MCF 10A (cell line): ENCODE measurements at regions of chr5 and their contacts with region 1.

Region 1: GRCh38 chr5:175534070-175534932 is 55.9 kb downstream of the SFXN1 start:
- DNase-seq: peak; percentile 83
- H3K4me3 Mint-ChIP-seq: no peak overlapping the region
- H3K27ac Mint-ChIP-seq: no peak overlapping the region
- H3K4me1 Mint-ChIP-seq: no peaks in the 10 kb centered on the region
- H3K27me3 Mint-ChIP-seq: no peaks in the 10 kb centered on the region
- CTCF ChIP-seq: peak; percentile 100

Region 2: DNA sequence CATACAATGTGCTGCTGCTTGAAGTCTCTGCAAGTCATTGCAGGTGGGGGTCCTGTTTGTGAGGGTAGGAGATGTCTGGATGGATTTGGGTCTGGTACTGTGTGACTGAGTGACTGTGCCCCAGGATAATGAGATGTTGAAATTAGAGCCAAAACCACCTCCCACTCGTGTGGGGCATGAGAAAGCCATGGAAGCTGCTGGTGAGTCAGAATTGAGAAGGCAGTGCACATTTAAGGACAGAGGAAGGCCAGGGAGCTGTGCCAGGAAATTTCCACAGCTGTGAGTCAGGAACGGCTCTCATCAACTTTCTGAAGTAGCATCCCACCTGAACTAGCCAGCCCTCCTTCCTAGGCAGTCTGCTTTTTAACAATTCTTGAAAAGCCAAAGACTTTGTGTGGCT is 320.1 kb before region 1 on chr5:
- CTCF ChIA-PET with region 1: no interaction called
- POLR2A ChIA-PET with region 1: no interaction called
- intact Hi-C with region 1: no loop called
- DNase-seq: peak; percentile 88
- H3K4me3 Mint-ChIP-seq: no peak overlapping the region
- H3K27ac Mint-ChIP-seq: no peak overlapping the region
- H3K4me1 Mint-ChIP-seq: peaks cover 6% of the 10 kb centered on the region
- H3K27me3 Mint-ChIP-seq: peaks cover 60% of the 10 kb centered on the region
- CTCF ChIP-seq: no peak

Region 3: DNA sequence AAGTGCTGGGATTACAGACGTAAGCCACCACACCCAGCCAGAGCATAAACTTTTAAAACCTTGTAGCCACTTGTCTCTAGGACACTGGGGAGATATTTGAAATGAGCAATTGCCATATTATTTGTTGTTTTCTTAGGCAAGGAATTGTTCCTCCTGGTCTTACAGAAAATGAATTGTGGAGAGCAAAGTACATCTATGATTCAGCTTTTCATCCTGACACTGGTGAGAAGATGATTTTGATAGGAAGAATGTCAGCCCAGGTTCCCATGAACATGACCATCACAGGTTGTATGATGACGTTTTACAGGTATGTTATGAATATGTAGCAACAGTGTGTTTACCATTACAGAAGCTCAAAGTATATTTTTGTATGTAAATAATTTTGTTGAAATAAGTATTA is 25.4 kb before region 1 on chr5:
- CTCF ChIA-PET with region 1: interaction called, 24 read pairs
- POLR2A ChIA-PET with region 1: no interaction called
- intact Hi-C with region 1: no loop called
- DNase-seq: no peak
- H3K4me3 Mint-ChIP-seq: no peak overlapping the region
- H3K27ac Mint-ChIP-seq: no peak overlapping the region
- H3K4me1 Mint-ChIP-seq: no peaks in the 10 kb centered on the region
- H3K27me3 Mint-ChIP-seq: no peaks in the 10 kb centered on the region
- CTCF ChIP-seq: no peak

Region 4: GRCh38 chr5:175548626-175549311 is 14.5 kb after region 1 on chr5:
- CTCF ChIA-PET with region 1: interaction called, 32 read pairs
- POLR2A ChIA-PET with region 1: no interaction called
- intact Hi-C with region 1: no loop called
- DNase-seq: no peak
- H3K4me3 Mint-ChIP-seq: no peak overlapping the region
- H3K27ac Mint-ChIP-seq: no peak overlapping the region
- H3K4me1 Mint-ChIP-seq: no peaks in the 10 kb centered on the region
- H3K27me3 Mint-ChIP-seq: peaks cover 62% of the 10 kb centered on the region
- CTCF ChIP-seq: no peak

Region 5: GRCh38 chr5:175572886-175573285 is 38.6 kb after region 1 on chr5:
- CTCF ChIA-PET with region 1: interaction called, 10 read pairs
- POLR2A ChIA-PET with region 1: no interaction called
- intact Hi-C with region 1: no loop called
- DNase-seq: peak; percentile 31
- H3K4me3 Mint-ChIP-seq: no peak overlapping the region
- H3K27ac Mint-ChIP-seq: no peak overlapping the region
- H3K4me1 Mint-ChIP-seq: peaks cover 7% of the 10 kb centered on the region
- H3K27me3 Mint-ChIP-seq: peaks cover 17% of the 10 kb centered on the region
- CTCF ChIP-seq: no peak

Region 6: DNA sequence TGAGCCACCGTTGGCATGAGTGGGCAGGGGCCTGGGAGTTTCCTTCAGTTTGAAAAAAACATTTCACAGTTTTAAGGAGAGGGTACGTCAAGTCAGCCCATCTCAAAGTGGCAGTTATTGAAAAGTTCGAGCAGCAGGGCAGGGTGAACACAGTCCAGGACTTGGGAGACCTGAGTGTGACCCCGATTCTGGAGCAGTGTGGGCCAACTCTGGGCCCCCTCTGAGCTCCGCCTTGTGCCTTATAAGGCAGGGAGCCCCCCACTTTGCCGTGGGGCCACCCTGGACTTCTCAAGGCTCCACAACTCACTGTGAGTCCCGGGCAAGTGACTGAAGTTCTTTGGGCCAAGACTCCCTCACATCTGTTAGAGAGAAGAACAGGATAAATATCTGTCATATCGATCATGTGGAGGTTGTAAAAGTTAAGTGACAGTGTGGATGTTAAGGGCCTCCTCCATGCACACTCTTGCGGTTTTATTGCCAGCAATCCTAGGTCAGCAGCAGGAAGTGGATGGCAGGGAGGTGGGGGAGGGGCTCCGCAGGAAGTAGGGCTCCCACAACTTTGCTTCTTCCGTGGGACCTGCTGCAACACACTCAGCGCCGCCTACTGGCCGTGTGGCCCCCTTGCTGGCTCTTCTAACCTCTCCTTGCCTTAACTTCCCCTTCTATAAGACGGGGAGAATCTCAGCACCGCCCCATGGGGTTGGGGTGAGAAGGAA is 162.0 kb after region 1 on chr5:
- CTCF ChIA-PET with region 1: interaction called, 26 read pairs
- POLR2A ChIA-PET with region 1: interaction called, 3 read pairs
- intact Hi-C with region 1: loop called (anchors 1 kb)
- DNase-seq: peak; percentile 60
- H3K4me3 Mint-ChIP-seq: no peak overlapping the region
- H3K27ac Mint-ChIP-seq: no peak overlapping the region
- H3K4me1 Mint-ChIP-seq: no peaks in the 10 kb centered on the region
- H3K27me3 Mint-ChIP-seq: peaks cover 33% of the 10 kb centered on the region
- CTCF ChIP-seq: peak; percentile 48